ENCODE measurements at regions of chr16 and their contacts with region 1.

Region 1: GRCh38 chr16:11072420-11073153 is 128.2 kb downstream of the CLEC16A start:
- DNase-seq: no peak
- ATAC-seq: no peak

Region 2: GRCh38 chr16:9633844-9634243 is 1438.7 kb before region 1 on chr16:
- intact Hi-C with region 1: no loop called
- DNase-seq: no peak
- ATAC-seq: no peak

Region 3: GRCh38 chr16:11114366-11115164 is 42.0 kb after region 1 on chr16:
- intact Hi-C with region 1: loop called (anchors 1 kb)
- DNase-seq: no peak
- ATAC-seq: peak; percentile 17